ENCODE measurements at regions of chr6 and their contacts with region 1.

Region 1: DNA sequence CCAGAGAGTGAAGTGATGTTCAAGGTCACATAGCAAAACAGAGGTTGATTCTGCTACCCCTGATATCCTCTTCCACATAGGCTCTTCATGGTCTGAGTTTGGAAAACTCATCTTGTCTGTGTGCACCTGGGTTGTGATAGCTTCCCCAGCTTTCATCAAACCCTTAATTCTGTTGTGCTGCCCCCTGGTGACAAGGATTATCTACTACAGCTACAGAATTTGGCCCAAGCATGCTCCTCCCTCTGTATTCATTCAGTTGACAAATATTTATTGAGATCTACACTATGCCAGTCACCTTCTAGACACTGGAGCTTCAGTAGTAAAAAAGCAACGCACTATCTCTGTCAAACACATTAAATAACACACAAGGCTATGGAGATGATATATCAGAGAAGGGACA is 50.4 kb downstream of the SMPDL3A start:
- DNase-seq: peak; percentile 78
- ATAC-seq: peak; percentile 83
- H3K4me3 ChIP-seq: no peak overlapping the region
- H3K27ac ChIP-seq: no peak overlapping the region
- H3K4me1 ChIP-seq: no peaks in the 10 kb centered on the region
- H3K27me3 ChIP-seq: no peaks in the 10 kb centered on the region
- CTCF ChIP-seq: peak; percentile 69

Region 2: DNA sequence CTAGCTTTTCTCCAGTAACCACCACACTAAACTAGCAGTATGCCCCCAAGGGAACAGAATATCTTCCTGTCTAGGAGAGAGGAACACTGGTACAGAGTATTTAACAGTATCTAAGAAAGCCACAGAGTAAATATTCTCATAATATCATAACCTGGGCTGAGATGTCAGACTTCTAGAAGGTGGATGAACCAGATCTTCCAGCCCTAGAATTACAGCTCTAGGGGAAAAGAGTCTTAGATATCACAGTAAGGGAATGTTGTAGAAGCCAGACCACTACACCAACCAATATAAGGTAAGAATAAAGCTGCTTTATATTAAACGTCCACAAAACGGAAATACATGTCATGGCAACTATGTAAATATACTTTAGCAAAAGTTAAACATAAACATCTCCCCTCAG is 380.3 kb before region 1 on chr6:
- CTCF ChIA-PET with region 1: no interaction called
- POLR2A ChIA-PET with region 1: no interaction called
- intact Hi-C with region 1: no loop called
- DNase-seq: peak; percentile 48
- ATAC-seq: peak; percentile 42
- H3K4me3 ChIP-seq: no peak overlapping the region
- H3K27ac ChIP-seq: no peak overlapping the region
- H3K4me1 ChIP-seq: peaks cover 12% of the 10 kb centered on the region; the same call in 1 of the 2 replicates
- H3K27me3 ChIP-seq: no peaks in the 10 kb centered on the region
- CTCF ChIP-seq: no peak

Region 3: GRCh38 chr6:122471107-122472021 is 368.1 kb before region 1 on chr6 and contains the start of gene SERINC1:
- CTCF ChIA-PET with region 1: no interaction called
- POLR2A ChIA-PET with region 1: no interaction called
- intact Hi-C with region 1: loop called (anchors 1 kb)
- DNase-seq: peak; percentile 90
- ATAC-seq: peak; percentile 89
- H3K4me3 ChIP-seq: peak within 1 kb of the TSS; percentile 91
- H3K27ac ChIP-seq: peak within 1 kb of the TSS; percentile 43
- H3K4me1 ChIP-seq: no peaks in the 10 kb centered on the region
- H3K27me3 ChIP-seq: no peaks in the 10 kb centered on the region
- CTCF ChIP-seq: no peak
- total RNA-seq, gene SERINC1: 27.8 and 31.7 TPM in 2 replicates

Region 4: DNA sequence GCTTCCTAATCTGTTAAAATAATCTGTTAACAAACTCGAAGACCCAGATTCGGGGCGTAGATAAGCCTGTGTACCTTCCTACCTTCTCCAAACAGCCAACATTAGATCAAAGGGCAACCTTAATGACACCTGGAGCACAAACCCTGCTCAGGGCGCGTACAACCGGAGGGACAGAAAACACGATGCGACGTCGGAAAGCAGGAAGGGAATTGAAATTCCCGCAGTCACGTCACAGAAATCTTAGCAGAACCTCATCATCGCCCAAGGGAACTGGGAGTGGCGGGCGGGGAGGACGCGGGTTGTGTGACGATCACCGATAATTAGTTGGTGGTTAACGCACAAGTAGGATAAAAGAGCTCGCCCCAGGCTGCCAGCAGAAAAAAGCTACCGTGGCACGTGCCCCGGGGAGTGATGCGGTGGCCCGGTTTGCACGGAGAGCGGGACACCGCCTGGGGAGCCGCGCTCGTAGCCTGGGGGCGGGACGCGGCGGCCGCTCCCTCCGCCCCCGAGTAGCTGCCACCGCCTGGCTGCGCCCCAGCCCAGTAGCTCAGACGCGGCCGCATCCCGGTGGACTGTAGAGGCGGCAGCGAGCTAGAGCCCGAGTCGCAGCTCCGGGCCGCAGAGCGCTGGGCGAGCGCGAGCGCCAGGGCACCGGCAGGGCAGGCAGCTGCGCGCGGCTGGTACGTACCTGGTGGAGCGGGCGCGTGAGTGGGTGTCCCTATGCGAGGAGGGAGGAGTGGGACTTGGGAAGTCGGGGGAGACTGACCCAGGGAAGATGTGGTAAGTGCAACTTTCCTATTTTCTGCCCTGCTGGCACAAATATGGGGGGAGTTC is 229.4 kb before region 1 on chr6 and contains the start of gene PKIB:
- CTCF ChIA-PET with region 1: no interaction called
- POLR2A ChIA-PET with region 1: interaction called, 8 read pairs
- intact Hi-C with region 1: loop called (anchors 1 kb)
- DNase-seq: peak; percentile 82
- ATAC-seq: peak; percentile 93
- H3K4me3 ChIP-seq: peak within 1 kb of the TSS; percentile 94
- H3K27ac ChIP-seq: peak within 1 kb of the TSS; percentile 49
- H3K4me1 ChIP-seq: peaks cover 4% of the 10 kb centered on the region
- H3K27me3 ChIP-seq: no peaks in the 10 kb centered on the region
- CTCF ChIP-seq: peak; percentile 28; the same call in 1 of the 2 replicates
- total RNA-seq, gene PKIB: 22.4 and 28.0 TPM in 2 replicates

Region 5: DNA sequence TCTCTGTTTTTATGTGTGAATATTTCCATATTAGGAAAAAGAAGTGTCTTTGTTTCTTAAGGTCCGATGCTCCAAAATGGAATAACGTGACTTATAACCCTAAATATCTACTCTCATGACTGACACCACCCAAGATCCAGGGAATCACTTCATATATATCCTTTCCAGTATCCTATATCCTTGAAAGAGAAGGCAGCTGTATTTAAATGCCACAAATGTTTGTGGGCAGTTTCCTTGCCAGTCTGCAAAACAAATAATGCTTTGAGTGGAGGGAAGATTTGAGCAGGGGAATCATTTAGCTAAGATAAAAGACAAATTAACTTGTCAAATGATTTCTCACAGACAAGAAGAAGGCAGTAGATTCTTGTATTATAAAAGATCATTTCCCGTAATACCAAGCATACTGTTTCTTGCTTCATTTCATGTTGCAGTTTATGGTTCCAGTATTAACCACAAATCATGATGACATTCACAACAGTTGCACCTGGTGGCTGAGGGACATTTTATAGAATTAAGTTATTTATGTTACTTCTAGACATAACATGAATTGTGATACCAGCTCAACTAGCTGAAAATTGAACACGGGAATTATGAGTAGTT is 89.9 kb before region 1 on chr6:
- CTCF ChIA-PET with region 1: interaction called, 12 read pairs
- POLR2A ChIA-PET with region 1: no interaction called
- intact Hi-C with region 1: no loop called
- DNase-seq: no peak
- ATAC-seq: no peak
- H3K4me3 ChIP-seq: no peak overlapping the region
- H3K27ac ChIP-seq: no peak overlapping the region
- H3K4me1 ChIP-seq: no peaks in the 10 kb centered on the region
- H3K27me3 ChIP-seq: no peaks in the 10 kb centered on the region
- CTCF ChIP-seq: no peak

Region 6: GRCh38 chr6:122789182-122790027 is 50.1 kb before region 1 on chr6 and contains the start of gene SMPDL3A:
- CTCF ChIA-PET with region 1: interaction called, 3 read pairs
- POLR2A ChIA-PET with region 1: no interaction called
- intact Hi-C with region 1: loop called (anchors 5 kb)
- DNase-seq: peak; percentile 72
- ATAC-seq: peak; percentile 73
- H3K4me3 ChIP-seq: peak within 1 kb of the TSS; percentile 88
- H3K27ac ChIP-seq: peak within 1 kb of the TSS; percentile 80
- H3K4me1 ChIP-seq: peaks cover 27% of the 10 kb centered on the region
- H3K27me3 ChIP-seq: no peaks in the 10 kb centered on the region
- CTCF ChIP-seq: peak; percentile 63
- total RNA-seq, gene SMPDL3A: 2.7 and 4.6 TPM in 2 replicates

Region 7: DNA sequence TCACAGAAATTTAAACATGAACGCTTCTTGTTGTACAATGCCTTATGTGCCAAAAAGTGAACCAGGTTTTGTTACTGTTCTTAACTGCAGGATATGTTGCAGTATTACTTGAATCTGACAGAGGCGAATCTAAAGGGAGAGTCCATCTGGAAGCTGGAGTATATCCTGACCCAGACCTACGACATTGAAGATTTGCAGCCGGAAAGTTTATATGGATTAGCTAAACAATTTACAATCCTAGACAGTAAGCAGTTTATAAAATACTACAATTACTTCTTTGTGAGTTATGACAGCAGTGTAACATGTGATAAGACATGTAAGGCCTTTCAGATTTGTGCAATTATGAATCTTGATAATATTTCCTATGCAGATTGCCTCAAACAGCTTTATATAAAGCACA is 30.5 kb before region 1 on chr6:
- CTCF ChIA-PET with region 1: no interaction called
- POLR2A ChIA-PET with region 1: no interaction called
- intact Hi-C with region 1: no loop called
- DNase-seq: no peak
- ATAC-seq: no peak
- H3K4me3 ChIP-seq: no peak overlapping the region
- H3K27ac ChIP-seq: no peak overlapping the region
- H3K4me1 ChIP-seq: no peaks in the 10 kb centered on the region
- H3K27me3 ChIP-seq: no peaks in the 10 kb centered on the region
- CTCF ChIP-seq: no peak